AG04449 (cell line): ENCODE measurements at regions of chr11 and their contacts with region 1.

Region 1: GRCh38 chr11:59158206-59159068 is 13.5 kb upstream of the DTX4 start:
- DNase-seq: no peak
- H3K4me3 ChIP-seq: no peak overlapping the region
- CTCF ChIP-seq: peak; percentile 63

Region 2: DNA sequence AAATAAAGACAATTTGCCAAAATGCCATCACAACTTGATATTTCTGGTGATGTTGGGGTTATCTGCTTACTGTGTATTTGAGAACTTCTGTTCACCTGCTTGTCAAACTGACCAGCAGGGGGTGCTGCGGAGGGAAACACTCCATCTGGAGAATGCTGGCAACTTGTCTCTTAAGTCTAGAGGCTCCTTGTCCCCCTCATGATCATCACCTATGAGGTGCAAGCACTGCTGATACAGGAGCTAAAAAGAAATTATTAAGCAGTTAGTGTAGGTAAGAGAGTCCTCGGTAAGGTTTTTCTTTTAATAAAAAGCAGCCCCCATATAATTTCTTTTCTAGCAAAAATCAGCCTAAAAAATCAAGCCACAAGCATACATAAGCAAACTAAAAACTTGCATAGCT is 105.0 kb before region 1 on chr11:
- CTCF ChIA-PET with region 1: interaction called, 50 read pairs
- POLR2A ChIA-PET with region 1: no interaction called
- DNase-seq: no peak
- H3K4me3 ChIP-seq: no peak overlapping the region
- CTCF ChIP-seq: peak; percentile 69

Region 3: DNA sequence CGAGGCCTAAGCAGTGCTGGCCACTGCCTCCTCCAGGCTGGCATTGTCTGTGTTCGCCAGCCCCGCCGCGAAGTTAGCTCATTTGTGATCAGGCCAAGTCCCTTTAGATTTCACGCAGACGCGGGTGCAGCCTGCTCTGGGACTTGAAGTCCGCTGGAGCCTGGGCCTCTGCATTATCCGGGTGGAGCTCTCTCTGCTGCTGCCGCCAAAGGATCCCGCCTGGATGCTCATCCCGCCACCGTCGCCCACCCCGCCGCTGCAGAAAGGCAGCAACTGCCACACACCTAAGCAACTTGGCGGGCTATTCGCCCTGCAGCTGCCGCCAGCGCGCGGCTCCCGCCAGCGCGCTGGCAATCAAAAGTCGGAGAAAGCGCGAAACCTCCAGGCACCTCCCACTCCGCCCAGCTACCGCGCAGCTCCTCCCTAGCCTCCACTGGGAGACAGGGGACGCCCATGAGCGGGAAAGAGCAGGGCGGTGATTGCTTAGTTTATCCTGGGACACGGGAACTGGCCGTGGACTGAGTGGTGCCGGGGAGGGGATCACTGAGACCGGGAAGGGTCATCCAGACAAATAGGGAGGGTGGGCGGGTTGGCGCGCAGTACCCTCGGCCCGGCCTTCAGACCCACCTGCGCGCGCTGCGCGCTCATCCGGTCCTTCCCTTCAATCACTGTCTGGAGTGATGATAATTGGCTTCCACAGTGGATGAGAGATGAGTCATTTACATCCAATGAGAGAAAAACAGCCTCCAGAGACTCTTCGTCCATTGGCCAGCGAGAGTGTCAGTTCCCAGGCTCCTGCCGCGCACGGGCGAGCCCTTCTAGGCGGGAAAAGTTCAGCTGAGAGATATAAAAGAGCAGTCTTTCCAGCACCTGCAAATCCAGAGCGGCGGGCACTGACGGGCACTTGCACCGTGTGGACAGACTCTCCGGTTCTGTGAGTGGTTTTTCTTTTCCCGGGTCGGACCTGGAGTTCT is 51.8 kb before region 1 on chr11 and contains the start of gene FAM111B:
- CTCF ChIA-PET with region 1: interaction called, 12 read pairs
- POLR2A ChIA-PET with region 1: no interaction called
- DNase-seq: peak; percentile 47
- H3K4me3 ChIP-seq: peak within 1 kb of the TSS; percentile 68
- CTCF ChIP-seq: peak; percentile 23

Region 4: DNA sequence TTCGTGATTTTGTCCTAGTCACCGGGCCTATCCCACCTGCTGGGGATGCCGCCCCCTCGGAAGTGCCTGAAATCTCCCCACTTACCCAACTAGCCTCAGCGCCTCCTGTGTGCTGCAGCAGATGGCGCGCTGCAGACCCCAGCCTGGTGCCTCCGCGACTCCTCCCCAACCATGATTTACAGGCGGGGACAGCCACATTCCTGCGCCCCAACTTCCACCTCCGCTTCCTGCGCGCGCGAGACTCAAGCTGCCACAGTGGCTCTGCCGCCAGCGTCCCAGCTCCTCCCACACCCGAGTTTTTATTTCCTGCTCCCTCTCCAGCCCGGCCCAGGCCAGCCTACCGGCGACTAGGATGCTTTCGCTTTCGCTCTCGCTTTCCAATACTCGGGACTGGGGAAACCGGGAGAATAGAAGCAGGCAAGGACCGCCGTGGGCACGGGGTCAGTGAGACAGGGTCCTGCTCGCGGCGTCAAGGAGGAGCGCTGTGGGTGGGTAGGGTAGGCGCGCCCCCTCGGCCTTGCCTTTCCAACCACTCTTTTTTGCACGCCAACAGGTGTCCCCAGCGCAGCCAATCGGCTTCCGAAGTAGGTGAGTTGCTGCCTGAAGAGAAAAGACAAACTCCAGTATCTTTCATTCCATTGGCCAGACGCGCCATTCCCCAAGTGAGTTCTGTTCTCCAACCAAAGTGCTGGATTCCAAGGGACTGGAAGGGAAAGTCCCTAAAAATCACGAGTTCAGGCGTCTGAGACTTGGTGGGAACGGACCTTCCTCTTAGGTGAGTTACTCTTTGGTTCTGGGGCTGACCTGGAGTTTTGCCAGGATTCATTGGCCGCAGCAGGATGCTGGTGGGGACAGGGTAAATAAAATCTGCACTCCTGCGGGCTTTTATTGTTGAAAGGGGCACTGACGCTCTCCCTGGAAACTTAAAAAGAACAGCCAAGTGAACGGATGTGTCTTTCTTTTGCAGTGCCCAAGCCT is 15.6 kb before region 1 on chr11 and contains the start of gene FAM111A:
- CTCF ChIA-PET with region 1: interaction called, 73 read pairs
- POLR2A ChIA-PET with region 1: interaction called, 3 read pairs
- DNase-seq: peak; percentile 36
- H3K4me3 ChIP-seq: peak within 1 kb of the TSS; percentile 92
- CTCF ChIP-seq: peak; percentile 54